ENCODE measurements at regions of chr12 and their contacts with region 1.

Region 1: DNA sequence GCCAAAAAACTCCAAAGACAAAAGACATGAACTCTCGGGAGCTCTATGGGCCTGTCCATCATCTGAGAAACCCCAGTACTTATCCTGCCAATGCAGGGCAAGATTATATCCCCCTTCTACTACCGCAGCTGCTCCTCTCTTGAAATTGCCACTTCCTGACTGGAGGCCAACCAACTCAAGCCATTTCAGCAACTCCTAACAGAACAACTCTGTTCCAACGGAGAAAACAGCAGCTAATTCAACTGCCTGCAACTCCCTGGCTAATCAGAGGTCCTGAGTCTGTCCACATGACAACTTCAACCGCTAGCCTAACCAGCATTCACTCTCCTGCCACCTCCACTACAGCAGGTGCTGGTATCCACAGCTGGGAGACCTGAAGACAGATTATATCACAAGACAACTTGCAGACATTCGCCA is 24.1 kb downstream of the CEP83 start:
- DNase-seq: peak in 1 of 2 donors; percentile 18
- H3K4me3 ChIP-seq: no peak overlapping the region
- H3K27ac ChIP-seq: no peak overlapping the region
- H3K4me1 ChIP-seq: peaks cover 0 to 30% (median 16%) of the 10 kb centered on the region in 4 donors
- H3K27me3 ChIP-seq: no peaks in the 10 kb centered on the region
- CTCF ChIP-seq: no peak
- EP300 ChIP-seq: no peak
- POLR2A ChIP-seq: no peak

Region 2: GRCh38 chr12:93785262-93786010 is 650.1 kb before region 1 on chr12:
- intact Hi-C with region 1: no loop called
- DNase-seq: peak in 1 of 2 donors; percentile 38
- H3K4me3 ChIP-seq: no peak overlapping the region
- H3K27ac ChIP-seq: peak overlapping the region; percentile 38 to 87 (median 81)
- H3K4me1 ChIP-seq: peaks cover 10 to 37% (median 27%) of the 10 kb centered on the region in 4 donors
- H3K27me3 ChIP-seq: no peaks in the 10 kb centered on the region
- CTCF ChIP-seq: no peak
- EP300 ChIP-seq: peak; percentile 50
- POLR2A ChIP-seq: no peak

Region 3: DNA sequence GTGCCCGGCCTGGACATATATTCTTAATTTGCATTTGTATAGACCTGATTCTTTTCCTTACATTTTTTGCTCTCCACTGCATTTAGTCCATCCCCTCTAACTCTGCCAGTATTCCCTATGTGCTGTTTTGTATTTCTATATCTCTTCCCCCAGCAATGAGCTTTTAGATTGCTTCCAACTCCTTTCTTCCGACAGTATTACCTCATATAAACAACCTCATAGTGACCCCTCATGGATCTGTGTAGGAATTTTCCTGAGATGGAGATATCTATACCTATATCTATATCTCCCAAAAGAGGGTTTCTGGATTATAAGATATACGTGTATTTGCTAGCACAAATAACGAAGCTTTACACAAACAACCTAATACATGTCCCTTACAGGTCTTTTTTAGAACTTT is 596.5 kb before region 1 on chr12:
- intact Hi-C with region 1: no loop called
- DNase-seq: no peak
- H3K4me3 ChIP-seq: no peak overlapping the region
- H3K27ac ChIP-seq: no peak overlapping the region
- H3K4me1 ChIP-seq: no peaks in the 10 kb centered on the region
- H3K27me3 ChIP-seq: no peaks in the 10 kb centered on the region
- CTCF ChIP-seq: no peak
- EP300 ChIP-seq: no peak
- POLR2A ChIP-seq: no peak

Region 4: DNA sequence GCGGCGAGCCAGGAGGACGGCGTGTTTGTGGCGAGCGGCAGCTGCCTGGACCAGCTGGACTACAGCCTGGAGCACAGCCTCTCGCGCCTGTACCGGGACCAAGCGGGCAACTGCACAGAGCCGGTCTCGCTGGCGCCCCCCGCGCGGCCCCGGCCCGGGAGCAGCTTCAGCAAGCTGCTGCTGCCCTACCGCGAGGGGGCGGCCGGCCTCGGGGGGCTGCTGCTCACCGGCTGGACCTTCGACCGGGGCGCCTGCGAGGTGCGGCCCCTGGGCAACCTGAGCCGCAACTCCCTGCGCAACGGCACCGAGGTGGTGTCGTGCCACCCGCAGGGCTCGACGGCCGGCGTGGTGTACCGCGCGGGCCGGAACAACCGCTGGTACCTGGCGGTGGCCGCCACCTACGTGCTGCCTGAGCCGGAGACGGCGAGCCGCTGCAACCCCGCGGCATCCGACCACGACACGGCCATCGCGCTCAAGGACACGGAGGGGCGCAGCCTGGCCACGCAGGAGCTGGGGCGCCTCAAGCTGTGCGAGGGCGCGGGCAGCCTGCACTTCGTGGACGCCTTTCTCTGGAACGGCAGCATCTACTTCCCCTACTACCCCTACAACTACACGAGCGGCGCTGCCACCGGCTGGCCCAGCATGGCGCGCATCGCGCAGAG is 286.3 kb before region 1 on chr12:
- intact Hi-C with region 1: loop called (anchors 10 kb)
- DNase-seq: peak; percentile 33 to 76
- H3K4me3 ChIP-seq: peak overlapping the region; percentile 53 to 74 (median 60)
- H3K27ac ChIP-seq: peak overlapping the region in 4 of 5 donors; percentile 49 to 78 (median 74)
- H3K4me1 ChIP-seq: peaks cover 23 to 57% (median 40%) of the 10 kb centered on the region in 4 donors
- H3K27me3 ChIP-seq: peaks cover 9 to 75% (median 49%) of the 10 kb centered on the region in 3 donors
- CTCF ChIP-seq: peak in 1 of 7 experiments; percentile 23
- EP300 ChIP-seq: no peak
- POLR2A ChIP-seq: no peak

Region 5: GRCh38 chr12:94525951-94526350 is 90.4 kb after region 1 on chr12:
- intact Hi-C with region 1: no loop called
- DNase-seq: no peak
- H3K4me3 ChIP-seq: no peak overlapping the region
- H3K27ac ChIP-seq: no peak overlapping the region
- H3K4me1 ChIP-seq: no peaks in the 10 kb centered on the region
- H3K27me3 ChIP-seq: no peaks in the 10 kb centered on the region
- CTCF ChIP-seq: no peak
- EP300 ChIP-seq: no peak
- POLR2A ChIP-seq: no peak

Measured in stomach (tissue), 19 donors.